Natural killer cell (primary cell): ENCODE measurements at regions of chr1 and their contacts with region 1.

Region 1: DNA sequence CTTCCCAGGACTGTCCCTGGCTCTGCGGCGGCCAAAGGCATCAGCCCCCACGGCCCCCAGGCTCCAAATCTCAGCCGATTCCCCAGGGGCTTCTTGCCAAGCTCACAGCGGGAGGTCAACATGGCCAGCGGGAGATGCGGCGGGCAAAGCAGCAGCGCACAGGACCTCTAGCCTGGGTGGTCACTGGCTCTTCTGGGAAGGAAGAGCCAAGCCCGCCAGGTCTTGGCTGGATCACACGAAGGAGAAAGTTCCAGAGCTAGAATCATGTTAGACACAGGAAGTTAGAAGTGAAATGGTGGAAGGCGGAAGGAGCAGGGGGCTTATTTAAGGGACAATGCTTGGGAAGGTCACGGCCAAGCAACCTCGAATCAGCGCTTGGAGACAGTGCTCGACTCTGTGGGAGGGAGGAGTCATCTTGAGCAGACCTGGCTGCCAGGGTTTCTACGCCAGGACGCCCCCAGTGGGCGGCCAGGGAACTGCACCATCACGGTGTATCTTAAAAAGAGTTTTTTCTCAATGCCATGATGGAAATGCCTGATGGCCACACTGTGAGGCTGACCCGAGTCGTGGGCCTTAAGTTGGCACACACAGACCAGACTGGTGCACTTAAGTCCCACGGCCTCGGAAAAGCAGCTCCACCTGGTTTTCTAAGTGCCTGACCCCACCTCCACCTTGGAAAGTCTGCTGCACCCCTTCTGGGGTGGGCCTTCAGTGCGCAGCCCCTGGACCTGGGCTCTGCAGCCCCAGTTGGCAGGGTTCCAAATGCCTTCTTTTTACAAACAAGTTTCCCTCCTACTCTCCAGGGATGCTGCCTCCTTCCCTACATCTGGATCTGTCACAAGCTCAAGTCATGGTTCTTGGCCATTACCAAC is 29.3 kb downstream of the SLC66A1 start:
- DNase-seq: peak; percentile 71 to 85
- ATAC-seq: peak; percentile 80 to 97 (median 80)
- H3K4me3 ChIP-seq: no peak overlapping the region
- H3K4me3 Mint-ChIP-seq: no peak overlapping the region
- H3K27ac ChIP-seq: no peak overlapping the region
- H3K27ac Mint-ChIP-seq: peak overlapping the region; percentile 19 to 22
- H3K4me1 ChIP-seq: no peaks in the 10 kb centered on the region
- H3K4me1 Mint-ChIP-seq: peaks cover 0 to 5% of the 10 kb centered on the region in 2 donors
- H3K27me3 ChIP-seq: no peaks in the 10 kb centered on the region
- H3K27me3 Mint-ChIP-seq: no peaks in the 10 kb centered on the region
- CTCF ChIP-seq: peak; percentile 91

Region 2: DNA sequence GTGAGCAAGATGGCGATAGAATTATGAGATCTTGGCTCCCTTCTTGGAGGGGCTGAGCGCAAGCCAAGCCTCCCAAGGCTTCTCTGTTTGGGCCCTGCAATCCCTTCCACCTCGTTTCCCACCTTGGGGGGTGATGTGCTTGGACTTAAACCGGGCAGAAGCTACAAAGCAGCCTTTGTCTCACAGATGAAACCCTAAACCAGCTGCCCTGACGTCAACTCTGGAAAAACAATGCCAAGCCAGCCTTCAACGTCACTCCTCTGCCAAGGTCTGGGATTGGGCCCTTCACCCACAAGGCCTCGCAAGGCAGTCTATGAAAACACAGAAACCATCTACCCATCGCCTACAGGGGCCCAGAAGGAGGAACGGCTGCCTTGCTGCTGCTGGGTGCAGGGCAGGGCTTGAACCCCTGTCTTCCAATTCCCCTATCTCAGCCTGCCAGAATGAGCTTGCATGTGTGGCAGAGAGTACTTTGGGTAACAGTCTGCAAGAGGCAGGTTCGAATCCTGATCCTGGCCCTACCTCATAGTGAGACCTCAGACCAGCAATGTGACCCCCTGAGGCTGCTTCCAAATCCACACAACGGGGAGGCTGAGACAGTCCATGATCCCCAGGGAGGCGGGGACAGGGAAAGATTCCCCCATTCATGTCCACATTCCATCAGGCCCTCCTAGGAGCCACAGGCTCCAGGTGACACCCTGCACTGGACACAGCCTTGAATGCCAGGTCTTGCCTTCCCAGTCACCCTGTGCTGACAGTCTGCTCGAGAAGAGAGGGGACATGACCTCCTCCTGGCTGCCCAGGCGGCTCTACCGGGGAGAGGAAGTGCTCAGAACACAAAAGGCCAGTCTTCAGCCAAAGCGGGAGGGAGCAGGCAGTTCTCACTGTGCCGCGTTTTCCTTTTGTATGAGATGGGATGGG is 400.0 kb before region 1 on chr1:
- intact Hi-C with region 1: no loop called
- DNase-seq: no peak
- ATAC-seq: no peak
- H3K4me3 ChIP-seq: no peak overlapping the region
- H3K4me3 Mint-ChIP-seq: no peak overlapping the region
- H3K27ac ChIP-seq: no peak overlapping the region
- H3K27ac Mint-ChIP-seq: peak overlapping the region; percentile 54 to 56
- H3K4me1 ChIP-seq: peaks cover 86% of the 10 kb centered on the region
- H3K4me1 Mint-ChIP-seq: peaks cover 65 to 69% of the 10 kb centered on the region in 2 donors
- H3K27me3 ChIP-seq: no peaks in the 10 kb centered on the region
- H3K27me3 Mint-ChIP-seq: no peaks in the 10 kb centered on the region
- CTCF ChIP-seq: no peak

Region 3: GRCh38 chr1:19110257-19110927 is 231.0 kb before region 1 on chr1:
- intact Hi-C with region 1: no loop called
- DNase-seq: no peak
- ATAC-seq: no peak
- H3K4me3 ChIP-seq: no peak overlapping the region
- H3K4me3 Mint-ChIP-seq: no peak overlapping the region
- H3K27ac ChIP-seq: no peak overlapping the region
- H3K27ac Mint-ChIP-seq: no peak overlapping the region
- H3K4me1 ChIP-seq: no peaks in the 10 kb centered on the region
- H3K4me1 Mint-ChIP-seq: no peaks in the 10 kb centered on the region
- H3K27me3 ChIP-seq: no peaks in the 10 kb centered on the region
- H3K27me3 Mint-ChIP-seq: no peaks in the 10 kb centered on the region
- CTCF ChIP-seq: no peak

Region 4: GRCh38 chr1:19311959-19312781 is 29.3 kb before region 1 on chr1 and contains the starts of genes AKR7A2 and SLC66A1:
- intact Hi-C with region 1: no loop called
- DNase-seq: peak; percentile 91 to 95
- ATAC-seq: peak; percentile 96 to 99 (median 98)
- H3K4me3 ChIP-seq: peak within 1 kb of the TSS; percentile 75
- H3K4me3 Mint-ChIP-seq: peak within 1 kb of the TSS; percentile 87
- H3K27ac ChIP-seq: peak within 1 kb of the TSS; percentile 45
- H3K27ac Mint-ChIP-seq: peak within 1 kb of the TSS; percentile 73 to 78
- H3K4me1 ChIP-seq: peaks cover 52% of the 10 kb centered on the region
- H3K4me1 Mint-ChIP-seq: peaks cover 31 to 43% of the 10 kb centered on the region in 2 donors
- H3K27me3 ChIP-seq: no peaks in the 10 kb centered on the region
- H3K27me3 Mint-ChIP-seq: no peaks in the 10 kb centered on the region
- CTCF ChIP-seq: no peak
- total RNA-seq, gene AKR7A2: 25.5 to 31.9 (median 28.9) TPM
- total RNA-seq, gene SLC66A1: 5.8 to 8.5 (median 7.6) TPM

Region 5: GRCh38 chr1:19439464-19440171 is 98.2 kb after region 1 on chr1:
- intact Hi-C with region 1: no loop called
- DNase-seq: peak in 1 of 2 donors; percentile 70
- ATAC-seq: peak in 1 of 3 donors; percentile 50
- H3K4me3 ChIP-seq: no peak overlapping the region
- H3K4me3 Mint-ChIP-seq: no peak overlapping the region
- H3K27ac ChIP-seq: no peak overlapping the region
- H3K27ac Mint-ChIP-seq: peak overlapping the region; percentile 61 to 65
- H3K4me1 ChIP-seq: peaks cover 41% of the 10 kb centered on the region
- H3K4me1 Mint-ChIP-seq: peaks cover 88 to 91% of the 10 kb centered on the region in 2 donors
- H3K27me3 ChIP-seq: no peaks in the 10 kb centered on the region
- H3K27me3 Mint-ChIP-seq: no peaks in the 10 kb centered on the region
- CTCF ChIP-seq: no peak

Region 6: GRCh38 chr1:19651141-19651737 is 309.8 kb after region 1 on chr1:
- intact Hi-C with region 1: loop called (anchors 5 kb)
- DNase-seq: peak in 1 of 2 donors; percentile 75
- ATAC-seq: peak; percentile 45 to 63 (median 63)
- H3K4me3 ChIP-seq: no peak overlapping the region
- H3K4me3 Mint-ChIP-seq: no peak overlapping the region
- H3K27ac ChIP-seq: no peak overlapping the region
- H3K27ac Mint-ChIP-seq: no peak overlapping the region
- H3K4me1 ChIP-seq: peaks cover 8% of the 10 kb centered on the region
- H3K4me1 Mint-ChIP-seq: peaks cover 6 to 7% of the 10 kb centered on the region in 2 donors
- H3K27me3 ChIP-seq: no peaks in the 10 kb centered on the region
- H3K27me3 Mint-ChIP-seq: peaks cover 0 to 5% of the 10 kb centered on the region in 2 donors
- CTCF ChIP-seq: peak; percentile 20